Activated B cell treated with CpG ODN at 0.5 μM for 24 hours (primary cell): ENCODE measurements at regions of chr5 and their contacts with region 1.

Region 1: GRCh38 chr5:131209506-131210150 is 38.9 kb downstream of the LYRM7 start:
- DNase-seq: peak; percentile 44
- ATAC-seq: peak; percentile 87
- H3K4me3 Mint-ChIP-seq: peak overlapping the region; percentile 82
- H3K27ac Mint-ChIP-seq: peak overlapping the region; percentile 99
- H3K4me1 Mint-ChIP-seq: peaks cover 63% of the 10 kb centered on the region
- H3K27me3 Mint-ChIP-seq: no peaks in the 10 kb centered on the region
- CTCF ChIP-seq: no peak

Region 2: GRCh38 chr5:131165119-131165727 is 44.4 kb before region 1 on chr5 and contains the start of gene HINT1:
- CTCF ChIA-PET with region 1: interaction called, 4 read pairs
- POLR2A ChIA-PET with region 1: interaction called, 9 read pairs
- intact Hi-C with region 1: loop called (anchors 1 kb)
- DNase-seq: peak; percentile 91
- ATAC-seq: peak; percentile 83
- H3K4me3 Mint-ChIP-seq: peak within 1 kb of the TSS; percentile 96
- H3K27ac Mint-ChIP-seq: peak within 1 kb of the TSS; percentile 95
- H3K4me1 Mint-ChIP-seq: peaks cover 43% of the 10 kb centered on the region
- H3K27me3 Mint-ChIP-seq: no peaks in the 10 kb centered on the region
- CTCF ChIP-seq: no peak
- total RNA-seq, gene HINT1: 201 and 212 TPM in 2 replicates

Region 3: GRCh38 chr5:131170540-131171275 is 38.9 kb before region 1 on chr5 and contains the start of gene LYRM7:
- CTCF ChIA-PET with region 1: no interaction called
- POLR2A ChIA-PET with region 1: interaction called, 5 read pairs
- intact Hi-C with region 1: loop called (anchors 1 kb)
- DNase-seq: peak; percentile 80
- ATAC-seq: peak; percentile 96
- H3K4me3 Mint-ChIP-seq: peak within 1 kb of the TSS; percentile 98
- H3K27ac Mint-ChIP-seq: peak within 1 kb of the TSS; percentile 93
- H3K4me1 Mint-ChIP-seq: peaks cover 42% of the 10 kb centered on the region
- H3K27me3 Mint-ChIP-seq: no peaks in the 10 kb centered on the region
- CTCF ChIP-seq: no peak
- total RNA-seq, gene LYRM7: 11.9 and 13.1 TPM in 2 replicates

Region 4: GRCh38 chr5:131224387-131225201 is 15.0 kb after region 1 on chr5:
- CTCF ChIA-PET with region 1: interaction called, 4 read pairs
- POLR2A ChIA-PET with region 1: interaction called, 20 read pairs
- intact Hi-C with region 1: loop called (anchors 1 kb)
- DNase-seq: peak; percentile 33
- ATAC-seq: peak; percentile 84
- H3K4me3 Mint-ChIP-seq: no peak overlapping the region
- H3K27ac Mint-ChIP-seq: no peak overlapping the region
- H3K4me1 Mint-ChIP-seq: peaks cover 27% of the 10 kb centered on the region
- H3K27me3 Mint-ChIP-seq: no peaks in the 10 kb centered on the region
- CTCF ChIP-seq: no peak

Region 5: DNA sequence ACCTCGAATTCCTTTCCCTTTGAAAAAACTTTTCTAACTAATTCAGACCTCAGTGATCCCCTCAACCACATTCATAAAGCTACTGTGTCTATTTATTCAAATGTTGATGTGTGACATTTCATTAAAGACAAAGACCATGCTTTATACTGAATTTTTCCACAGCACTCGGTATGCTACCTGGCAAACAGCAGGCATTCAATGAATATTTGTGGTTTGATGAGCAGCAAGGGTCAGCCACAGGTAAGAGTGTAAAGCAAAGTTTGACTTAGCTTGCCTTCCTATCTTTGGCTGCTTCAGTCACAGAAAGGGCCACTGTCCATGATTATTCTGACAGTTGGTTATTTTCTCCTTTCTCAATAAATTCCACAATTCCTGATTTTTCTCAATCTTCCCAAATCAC is 49.1 kb after region 1 on chr5:
- CTCF ChIA-PET with region 1: interaction called, 3 read pairs
- POLR2A ChIA-PET with region 1: interaction called, 91 read pairs
- intact Hi-C with region 1: loop called (anchors 1 kb)
- DNase-seq: no peak
- ATAC-seq: no peak
- H3K4me3 Mint-ChIP-seq: peak overlapping the region; percentile 4
- H3K27ac Mint-ChIP-seq: peak overlapping the region; percentile 86
- H3K4me1 Mint-ChIP-seq: peaks cover 57% of the 10 kb centered on the region
- H3K27me3 Mint-ChIP-seq: no peaks in the 10 kb centered on the region
- CTCF ChIP-seq: no peak

Region 6: GRCh38 chr5:131281133-131281867 is 71.7 kb after region 1 on chr5:
- CTCF ChIA-PET with region 1: no interaction called
- POLR2A ChIA-PET with region 1: no interaction called
- intact Hi-C with region 1: no loop called
- DNase-seq: no peak
- ATAC-seq: no peak
- H3K4me3 Mint-ChIP-seq: peak overlapping the region; percentile 30
- H3K27ac Mint-ChIP-seq: peak overlapping the region; percentile 43
- H3K4me1 Mint-ChIP-seq: peaks cover 91% of the 10 kb centered on the region
- H3K27me3 Mint-ChIP-seq: no peaks in the 10 kb centered on the region
- CTCF ChIP-seq: no peak